ENCODE measurements at regions of chr9 and their contacts with region 1.

Region 1: DNA sequence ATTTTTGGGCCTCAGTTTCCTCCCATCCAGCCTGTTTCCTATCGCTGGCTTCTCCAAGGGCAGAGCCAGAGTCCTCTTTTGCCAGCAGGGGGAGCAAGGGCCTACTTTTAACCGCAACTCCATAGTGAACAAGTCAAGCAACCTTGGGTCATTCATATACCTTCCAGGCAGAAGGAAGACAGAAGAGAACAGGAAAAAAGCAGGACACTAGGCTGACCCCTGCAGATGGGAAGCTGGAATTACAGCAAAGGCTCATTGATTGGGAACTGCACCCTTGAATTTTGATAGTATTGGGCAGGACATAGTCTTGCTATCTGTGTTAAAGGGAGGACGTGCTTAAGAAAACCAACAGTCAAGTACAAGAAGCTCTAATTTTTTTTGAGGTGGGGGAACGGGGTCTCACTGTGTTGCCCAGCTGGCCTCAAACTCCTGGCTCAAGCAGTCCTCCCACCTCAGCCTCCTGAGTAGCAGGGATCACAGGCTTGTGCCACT is 30.1 kb downstream of the QRFP start:
- DNase-seq: peak; percentile 91
- H3K4me3 ChIP-seq: no peak overlapping the region
- H3K27ac ChIP-seq: no peak overlapping the region
- H3K4me1 ChIP-seq: peaks cover 23% of the 10 kb centered on the region
- H3K27me3 ChIP-seq: no peaks in the 10 kb centered on the region
- CTCF ChIP-seq: peak; percentile 98

Region 2: DNA sequence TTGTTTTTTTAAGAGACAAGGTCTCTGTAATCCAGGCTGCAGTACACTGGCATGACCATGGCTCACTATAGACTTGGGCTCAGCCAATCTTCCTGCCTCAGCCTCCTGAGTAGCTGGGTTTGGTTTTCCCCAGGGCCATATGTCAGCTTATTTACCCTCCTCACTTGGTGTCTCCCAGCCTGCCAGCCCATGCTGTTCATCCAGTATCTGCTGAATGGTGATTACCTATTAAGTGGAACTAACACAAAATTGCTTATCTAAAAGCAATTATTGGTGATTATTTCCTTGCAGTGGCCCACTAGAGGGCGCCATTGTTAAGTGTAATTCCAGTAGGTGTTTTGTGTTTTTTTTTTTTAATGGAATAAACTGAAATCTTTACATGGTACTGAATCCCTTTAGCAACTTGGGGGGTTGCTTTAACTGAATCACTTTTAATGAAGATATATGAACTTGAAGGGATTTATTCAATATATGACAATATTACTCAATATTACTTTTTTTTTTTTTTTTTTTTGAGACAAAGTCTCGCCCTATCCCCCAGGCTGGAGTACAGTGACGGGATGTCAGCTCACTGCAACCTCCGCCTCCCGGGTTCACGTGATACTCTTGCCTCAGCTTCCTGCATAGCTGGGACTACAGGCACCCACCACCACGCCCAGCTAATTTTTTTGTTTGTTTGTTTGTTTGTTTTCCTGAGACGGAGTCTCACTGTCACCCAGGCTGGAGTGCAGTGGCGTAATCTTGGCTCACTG is 159.1 kb before region 1 on chr9:
- CTCF ChIA-PET with region 1: interaction called, 7 read pairs
- POLR2A ChIA-PET with region 1: no interaction called
- intact Hi-C with region 1: loop called (anchors 2 kb)
- DNase-seq: peak; percentile 68
- H3K4me3 ChIP-seq: no peak overlapping the region
- H3K27ac ChIP-seq: no peak overlapping the region
- H3K4me1 ChIP-seq: no peaks in the 10 kb centered on the region
- H3K27me3 ChIP-seq: no peaks in the 10 kb centered on the region
- CTCF ChIP-seq: peak; percentile 92

Region 3: GRCh38 chr9:130770679-130771442 is 95.7 kb before region 1 on chr9:
- CTCF ChIA-PET with region 1: no interaction called
- POLR2A ChIA-PET with region 1: no interaction called
- intact Hi-C with region 1: loop called (anchors 2 kb)
- DNase-seq: peak; percentile 84
- H3K4me3 ChIP-seq: no peak overlapping the region
- H3K27ac ChIP-seq: no peak overlapping the region
- H3K4me1 ChIP-seq: no peaks in the 10 kb centered on the region
- H3K27me3 ChIP-seq: no peaks in the 10 kb centered on the region
- CTCF ChIP-seq: peak; percentile 73

Region 4: GRCh38 chr9:130997925-130998596 is 131.5 kb after region 1 on chr9:
- CTCF ChIA-PET with region 1: interaction called, 3 read pairs
- POLR2A ChIA-PET with region 1: no interaction called
- intact Hi-C with region 1: loop called (anchors 2 kb)
- DNase-seq: peak; percentile 72
- H3K4me3 ChIP-seq: no peak overlapping the region
- H3K27ac ChIP-seq: no peak overlapping the region
- H3K4me1 ChIP-seq: peaks cover 5% of the 10 kb centered on the region
- H3K27me3 ChIP-seq: peaks cover 7% of the 10 kb centered on the region
- CTCF ChIP-seq: peak; percentile 83

Region 5: DNA sequence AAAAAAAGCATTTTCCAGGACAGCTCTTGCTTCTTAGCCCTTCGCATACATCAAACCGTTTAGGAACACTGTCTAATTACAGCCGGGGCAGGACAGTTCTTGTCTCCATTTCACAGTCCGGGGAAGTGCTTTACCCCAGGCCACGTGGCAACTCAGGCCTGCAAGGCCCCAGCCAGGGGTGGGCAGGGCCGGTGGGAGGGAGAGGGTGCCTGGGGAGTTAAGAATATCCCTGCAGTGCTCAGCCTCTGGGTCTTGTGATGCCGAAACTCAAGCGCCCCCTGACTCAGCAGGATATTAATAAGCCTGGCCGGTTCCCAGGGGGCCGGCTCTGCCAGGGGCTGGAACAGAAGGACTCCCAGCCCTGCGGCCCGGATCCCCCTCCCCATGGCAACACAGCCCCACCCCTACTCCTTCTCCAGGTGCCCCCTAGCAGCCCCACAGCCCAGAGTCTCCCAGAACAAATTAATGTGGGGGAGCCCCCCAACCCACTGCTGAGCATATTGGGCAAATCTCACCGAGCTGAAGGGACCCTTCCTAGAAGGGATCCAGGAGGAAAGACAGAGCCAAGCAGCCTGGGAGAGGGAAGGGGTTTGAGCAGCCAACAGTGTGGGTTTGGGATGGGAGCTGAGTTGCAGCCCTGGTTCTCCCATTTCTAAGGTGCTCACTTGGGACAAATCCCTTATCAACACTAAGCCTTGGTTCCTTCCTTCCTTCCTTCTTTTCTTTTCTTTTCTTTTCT is 468.3 kb after region 1 on chr9:
- CTCF ChIA-PET with region 1: no interaction called
- POLR2A ChIA-PET with region 1: no interaction called
- intact Hi-C with region 1: no loop called
- DNase-seq: peak; percentile 56
- H3K4me3 ChIP-seq: no peak overlapping the region
- H3K27ac ChIP-seq: no peak overlapping the region
- H3K4me1 ChIP-seq: peaks cover 16% of the 10 kb centered on the region
- H3K27me3 ChIP-seq: no peaks in the 10 kb centered on the region
- CTCF ChIP-seq: no peak

Region 6: DNA sequence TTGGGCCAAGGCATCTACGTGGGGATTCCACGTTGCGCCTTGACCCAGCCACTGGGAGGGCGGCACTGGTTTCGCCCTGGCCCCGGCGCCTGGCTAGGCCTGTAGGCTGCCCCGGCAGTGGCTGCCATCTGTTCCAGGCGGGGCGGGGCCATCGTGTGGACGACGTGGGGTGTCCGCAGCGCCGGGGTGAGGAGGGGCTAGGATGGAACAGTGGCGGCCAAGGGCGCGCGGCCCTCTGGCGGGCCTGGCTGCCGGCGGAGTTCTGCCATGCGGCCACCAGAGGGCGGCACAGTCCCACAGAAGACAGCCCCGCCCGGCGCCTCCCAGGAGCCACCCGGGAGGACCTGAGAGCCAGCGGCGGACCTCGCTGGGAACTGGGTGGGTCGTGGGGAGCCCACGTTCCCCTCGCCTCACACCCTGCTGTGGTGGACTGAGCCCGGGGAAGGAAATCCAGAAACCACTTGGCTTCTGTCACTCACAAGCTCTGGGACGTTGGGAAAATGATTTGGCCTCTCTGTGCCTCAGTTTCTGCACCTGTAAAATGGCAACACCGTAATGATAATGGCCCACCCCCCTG is 895.9 kb after region 1 on chr9:
- CTCF ChIA-PET with region 1: no interaction called
- POLR2A ChIA-PET with region 1: no interaction called
- intact Hi-C with region 1: no loop called
- DNase-seq: peak; percentile 73
- H3K4me3 ChIP-seq: no peak overlapping the region
- H3K27ac ChIP-seq: no peak overlapping the region
- H3K4me1 ChIP-seq: no peaks in the 10 kb centered on the region
- H3K27me3 ChIP-seq: peaks cover 35% of the 10 kb centered on the region
- CTCF ChIP-seq: peak; percentile 91

Measured in A673 (cell line).